T-cell (primary cell): ENCODE measurements at regions of chr12 and their contacts with region 1.

Region 1: DNA sequence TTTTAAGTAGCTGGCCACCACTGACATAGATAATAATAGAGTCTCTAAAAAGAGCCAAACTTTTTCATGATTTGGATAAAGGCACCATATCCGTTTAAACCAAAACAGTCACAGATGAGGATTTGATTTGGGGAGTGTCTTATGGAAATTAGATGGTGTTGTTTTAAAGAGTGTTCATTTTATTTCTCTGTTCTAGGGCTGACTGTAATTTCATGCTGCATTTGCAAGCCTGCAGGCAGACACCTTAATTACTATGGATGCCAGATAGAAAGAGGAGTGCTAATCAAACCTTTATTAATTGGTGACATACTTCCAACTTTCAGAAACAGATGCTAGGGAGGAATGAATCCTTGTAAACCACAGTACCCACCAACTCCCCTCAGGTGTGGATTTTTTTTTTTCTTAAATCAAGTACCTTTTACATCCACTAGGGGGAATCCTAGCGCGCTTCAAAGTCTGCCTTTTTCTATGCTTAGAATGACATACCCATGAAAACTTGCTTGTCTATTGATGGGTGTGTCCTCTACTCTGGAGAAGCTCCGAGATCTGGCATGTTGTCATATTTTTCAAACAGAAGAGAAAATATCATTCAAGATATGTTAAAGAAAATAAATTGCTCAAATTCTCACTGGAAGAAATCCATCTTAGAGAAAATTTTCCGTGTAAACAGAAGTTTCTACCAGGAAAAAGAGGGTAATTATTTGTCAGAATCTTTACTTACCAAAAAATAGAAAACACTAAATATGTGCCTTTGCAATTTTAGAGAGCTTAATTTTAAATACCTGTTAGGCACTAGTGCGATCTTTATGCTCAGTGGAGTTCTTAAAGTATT is 14.2 kb upstream of the PLXNC1 start:
- DNase-seq: peak in 20 of 35 experiments; percentile 10 to 76 (median 22)
- ATAC-seq: peak; percentile 80 to 90 (median 86)
- H3K4me3 ChIP-seq: no peak overlapping the region
- H3K4me3 Mint-ChIP-seq: no peak overlapping the region
- H3K27ac ChIP-seq: no peak overlapping the region
- H3K27ac Mint-ChIP-seq: no peak overlapping the region
- H3K4me1 ChIP-seq: no peaks in the 10 kb centered on the region
- H3K4me1 Mint-ChIP-seq: peaks cover 3 to 9% (median 3%) of the 10 kb centered on the region in 3 donors
- H3K27me3 ChIP-seq: no peaks in the 10 kb centered on the region
- H3K27me3 Mint-ChIP-seq: no peaks in the 10 kb centered on the region

Region 2: DNA sequence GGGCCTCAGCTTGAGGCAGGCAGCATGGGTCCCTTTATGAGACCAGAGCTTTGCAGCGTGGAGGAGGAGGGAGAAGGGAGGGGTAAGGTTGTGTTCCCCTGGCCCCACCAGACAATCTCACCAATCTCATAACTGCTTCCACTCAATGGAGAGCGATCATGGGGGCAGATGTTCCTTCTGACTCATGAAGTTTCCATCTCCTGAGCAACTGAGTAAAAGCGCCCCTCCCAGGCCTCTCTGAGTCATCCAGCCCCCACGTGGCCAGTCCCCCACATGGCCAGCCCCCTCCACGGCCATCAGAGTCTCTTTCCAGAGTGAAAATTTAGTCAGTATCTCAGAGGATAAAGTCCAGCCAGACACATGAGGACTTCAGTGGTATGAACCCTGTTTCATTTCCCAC is 25.0 kb before region 1 on chr12:
- CTCF ChIA-PET with region 1: no interaction called
- POLR2A ChIA-PET with region 1: no interaction called
- DNase-seq: no peak
- ATAC-seq: no peak
- H3K4me3 ChIP-seq: no peak overlapping the region
- H3K4me3 Mint-ChIP-seq: no peak overlapping the region
- H3K27ac ChIP-seq: no peak overlapping the region
- H3K27ac Mint-ChIP-seq: no peak overlapping the region
- H3K4me1 ChIP-seq: no peaks in the 10 kb centered on the region
- H3K4me1 Mint-ChIP-seq: peaks cover 0 to 9% (median 0%) of the 10 kb centered on the region in 3 donors
- H3K27me3 ChIP-seq: peaks cover 0 to 18% of the 10 kb centered on the region in 2 experiments
- H3K27me3 Mint-ChIP-seq: peaks cover 1 to 14% of the 10 kb centered on the region in 2 donors

Region 3: GRCh38 chr12:94204499-94205247 is 70.5 kb after region 1 on chr12:
- CTCF ChIA-PET with region 1: interaction called in 1 of 2 experiments, 3 read pairs
- POLR2A ChIA-PET with region 1: interaction called in 1 of 2 experiments, 13 read pairs
- DNase-seq: no peak
- ATAC-seq: no peak
- H3K4me3 ChIP-seq: no peak overlapping the region
- H3K4me3 Mint-ChIP-seq: no peak overlapping the region
- H3K27ac ChIP-seq: peak overlapping the region; percentile 95
- H3K27ac Mint-ChIP-seq: peak overlapping the region; percentile 90 to 93
- H3K4me1 ChIP-seq: peaks cover 32 to 42% of the 10 kb centered on the region in 2 experiments
- H3K4me1 Mint-ChIP-seq: peaks cover 62 to 73% (median 63%) of the 10 kb centered on the region in 3 donors
- H3K27me3 ChIP-seq: no peaks in the 10 kb centered on the region
- H3K27me3 Mint-ChIP-seq: no peaks in the 10 kb centered on the region

Region 4: GRCh38 chr12:94534774-94535509 is 400.8 kb after region 1 on chr12:
- CTCF ChIA-PET with region 1: interaction called, 6 to 11 read pairs
- POLR2A ChIA-PET with region 1: no interaction called
- DNase-seq: no peak
- ATAC-seq: no peak
- H3K4me3 ChIP-seq: no peak overlapping the region
- H3K4me3 Mint-ChIP-seq: no peak overlapping the region
- H3K27ac ChIP-seq: no peak overlapping the region
- H3K27ac Mint-ChIP-seq: no peak overlapping the region
- H3K4me1 ChIP-seq: no peaks in the 10 kb centered on the region
- H3K4me1 Mint-ChIP-seq: peaks cover 0 to 6% (median 1%) of the 10 kb centered on the region in 3 donors
- H3K27me3 ChIP-seq: peaks cover 0 to 11% of the 10 kb centered on the region in 2 experiments
- H3K27me3 Mint-ChIP-seq: peaks cover 3 to 6% of the 10 kb centered on the region in 2 donors